ENCODE measurements at regions of chr17 and their contacts with region 1.

Region 1: GRCh38 chr17:28896884-28897768 is at the start of gene FLOT2:
- DNase-seq: peak; percentile 96
- H3K4me3 Mint-ChIP-seq: peak within 1 kb of the TSS; percentile 90
- H3K27ac Mint-ChIP-seq: peak within 1 kb of the TSS; percentile 93
- H3K4me1 Mint-ChIP-seq: peaks cover 26% of the 10 kb centered on the region
- H3K27me3 Mint-ChIP-seq: no peaks in the 10 kb centered on the region
- CTCF ChIP-seq: peak; percentile 5
- total RNA-seq, gene FLOT2: 98.5 and 126 TPM in 2 replicates

Region 2: DNA sequence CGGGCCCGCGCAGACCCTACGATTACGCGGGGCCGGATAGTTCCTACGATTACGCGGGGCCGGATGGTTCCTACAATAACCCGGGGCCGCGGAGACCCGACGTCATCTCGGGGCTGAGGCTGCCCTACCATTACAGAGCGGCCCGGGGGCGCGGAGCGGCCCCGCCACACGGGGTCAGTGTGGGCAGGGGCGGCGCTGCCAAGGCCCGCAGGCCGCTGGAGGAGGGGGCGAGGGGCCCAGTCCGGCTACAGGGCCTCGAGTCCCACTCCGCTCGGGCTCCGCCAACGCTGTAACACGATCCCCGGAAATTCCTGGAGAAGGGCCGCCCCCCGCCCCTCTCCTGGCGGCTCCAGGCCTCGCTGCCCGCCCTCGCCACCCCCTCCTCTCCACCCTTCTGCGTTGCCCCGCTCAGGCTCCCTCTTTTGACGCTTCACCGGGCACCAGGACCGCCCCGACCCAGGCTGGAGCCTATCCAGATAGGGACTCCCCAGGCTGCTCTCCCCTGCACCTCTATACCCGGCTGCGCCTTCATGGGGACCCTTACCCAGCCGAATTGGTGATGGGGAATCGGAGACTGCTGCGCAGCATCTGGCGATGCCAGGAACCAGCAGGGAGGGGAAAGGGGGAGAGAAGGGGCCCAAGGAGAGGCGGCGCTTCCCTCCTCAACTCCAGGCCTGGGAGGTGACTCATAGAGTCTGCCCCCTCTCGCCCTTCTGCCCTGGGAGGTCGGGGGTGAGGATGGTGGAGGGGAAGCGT is 179.4 kb before region 1 on chr17 and contains the start of gene RAB34:
- CTCF ChIA-PET with region 1: interaction called, 5 read pairs
- POLR2A ChIA-PET with region 1: interaction called, 15 read pairs
- intact Hi-C with region 1: no loop called
- DNase-seq: peak; percentile 90
- H3K4me3 Mint-ChIP-seq: peak within 1 kb of the TSS; percentile 91
- H3K27ac Mint-ChIP-seq: peak within 1 kb of the TSS; percentile 97
- H3K4me1 Mint-ChIP-seq: peaks cover 31% of the 10 kb centered on the region
- H3K27me3 Mint-ChIP-seq: no peaks in the 10 kb centered on the region
- CTCF ChIP-seq: peak; percentile 26
- total RNA-seq, gene RAB34: 90.0 and 105 TPM in 2 replicates

Region 3: GRCh38 chr17:28743225-28744103 is 153.7 kb before region 1 on chr17 and contains the start of gene TRAF4:
- CTCF ChIA-PET with region 1: interaction called, 8 read pairs
- POLR2A ChIA-PET with region 1: interaction called, 12 read pairs
- intact Hi-C with region 1: no loop called
- DNase-seq: peak; percentile 97
- H3K4me3 Mint-ChIP-seq: peak within 1 kb of the TSS; percentile 91
- H3K27ac Mint-ChIP-seq: peak within 1 kb of the TSS; percentile 93
- H3K4me1 Mint-ChIP-seq: peaks cover 13% of the 10 kb centered on the region
- H3K27me3 Mint-ChIP-seq: no peaks in the 10 kb centered on the region
- CTCF ChIP-seq: no peak
- total RNA-seq, gene TRAF4: 106 and 126 TPM in 2 replicates

Region 4: DNA sequence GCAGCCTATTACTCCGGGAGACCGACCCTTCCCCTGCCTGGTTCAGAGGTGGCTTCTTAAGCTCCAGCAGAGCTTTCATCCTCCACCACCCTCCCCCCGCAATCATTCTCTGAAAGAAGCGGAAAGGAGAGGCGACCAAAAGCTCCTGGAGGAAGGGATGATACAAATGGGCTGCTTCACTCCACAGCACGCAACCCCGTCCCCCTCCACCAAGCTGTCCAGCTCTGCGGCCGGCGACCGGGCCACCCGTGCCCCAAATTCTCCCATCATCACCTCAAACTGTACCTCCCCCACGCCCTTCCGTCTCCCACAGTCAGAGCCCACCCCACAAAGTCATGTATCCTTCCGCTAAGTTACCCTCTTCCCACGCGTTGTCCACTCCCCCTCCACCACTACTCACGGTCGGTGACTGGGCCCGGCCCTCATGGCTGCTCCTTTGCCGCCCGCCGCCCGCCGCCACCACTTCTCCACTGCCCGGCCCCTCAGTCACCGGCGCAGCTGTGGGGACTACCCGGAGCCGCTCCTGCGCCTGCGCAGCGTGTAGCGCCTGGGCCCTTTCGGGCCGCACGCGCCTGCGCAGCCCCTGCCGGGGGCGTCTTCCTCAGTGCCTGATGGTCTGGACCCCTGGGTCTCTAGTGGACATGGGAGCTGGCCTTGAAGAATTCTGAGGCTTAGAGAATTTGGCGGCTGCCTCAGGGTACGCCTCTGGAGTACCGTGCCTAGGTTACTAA is 54.7 kb before region 1 on chr17 and contains the start of gene FAM222B:
- CTCF ChIA-PET with region 1: interaction called, 5 read pairs
- POLR2A ChIA-PET with region 1: interaction called, 10 read pairs
- intact Hi-C with region 1: no loop called
- DNase-seq: peak; percentile 78
- H3K4me3 Mint-ChIP-seq: peak within 1 kb of the TSS; percentile 92
- H3K27ac Mint-ChIP-seq: peak within 1 kb of the TSS; percentile 50
- H3K4me1 Mint-ChIP-seq: peaks cover 5% of the 10 kb centered on the region
- H3K27me3 Mint-ChIP-seq: no peaks in the 10 kb centered on the region
- CTCF ChIP-seq: no peak
- total RNA-seq, gene FAM222B: 18.5 and 22.2 TPM in 2 replicates

Region 5: GRCh38 chr17:28878981-28879380 is 18.1 kb before region 1 on chr17:
- CTCF ChIA-PET with region 1: interaction called, 16 read pairs
- POLR2A ChIA-PET with region 1: interaction called, 3 read pairs
- intact Hi-C with region 1: no loop called
- DNase-seq: peak; percentile 66
- H3K4me3 Mint-ChIP-seq: no peak overlapping the region
- H3K27ac Mint-ChIP-seq: no peak overlapping the region
- H3K4me1 Mint-ChIP-seq: peaks cover 19% of the 10 kb centered on the region
- H3K27me3 Mint-ChIP-seq: no peaks in the 10 kb centered on the region
- CTCF ChIP-seq: peak; percentile 45

Region 6: GRCh38 chr17:28908640-28909167 is 11.6 kb after region 1 on chr17:
- CTCF ChIA-PET with region 1: interaction called, 11 read pairs
- POLR2A ChIA-PET with region 1: interaction called, 14 read pairs
- intact Hi-C with region 1: no loop called
- DNase-seq: peak; percentile 68
- H3K4me3 Mint-ChIP-seq: no peak overlapping the region
- H3K27ac Mint-ChIP-seq: peak overlapping the region; percentile 75
- H3K4me1 Mint-ChIP-seq: peaks cover 17% of the 10 kb centered on the region
- H3K27me3 Mint-ChIP-seq: no peaks in the 10 kb centered on the region
- CTCF ChIP-seq: no peak